GM12878 (cell line): ENCODE measurements at regions of chr17 and their contacts with region 1.

Region 1: GRCh38 chr17:7561028-7561575 is 617 bp upstream of the SENP3 start:
- DNase-seq: no peak
- ATAC-seq: peak; percentile 84
- H3K4me3 ChIP-seq: peak overlapping the region; percentile 92
- H3K27ac ChIP-seq: peak overlapping the region; percentile 23
- H3K4me1 ChIP-seq: peaks cover 37% of the 10 kb centered on the region
- H3K27me3 ChIP-seq: no peaks in the 10 kb centered on the region
- CTCF ChIP-seq: peak; percentile 93 to 99 (median 93); a peak in 5 of 6 replicates
- EP300 ChIP-seq: no peak
- POLR2A ChIP-seq: no peak
- RAD21 ChIP-seq: peak; percentile 74

Region 2: DNA sequence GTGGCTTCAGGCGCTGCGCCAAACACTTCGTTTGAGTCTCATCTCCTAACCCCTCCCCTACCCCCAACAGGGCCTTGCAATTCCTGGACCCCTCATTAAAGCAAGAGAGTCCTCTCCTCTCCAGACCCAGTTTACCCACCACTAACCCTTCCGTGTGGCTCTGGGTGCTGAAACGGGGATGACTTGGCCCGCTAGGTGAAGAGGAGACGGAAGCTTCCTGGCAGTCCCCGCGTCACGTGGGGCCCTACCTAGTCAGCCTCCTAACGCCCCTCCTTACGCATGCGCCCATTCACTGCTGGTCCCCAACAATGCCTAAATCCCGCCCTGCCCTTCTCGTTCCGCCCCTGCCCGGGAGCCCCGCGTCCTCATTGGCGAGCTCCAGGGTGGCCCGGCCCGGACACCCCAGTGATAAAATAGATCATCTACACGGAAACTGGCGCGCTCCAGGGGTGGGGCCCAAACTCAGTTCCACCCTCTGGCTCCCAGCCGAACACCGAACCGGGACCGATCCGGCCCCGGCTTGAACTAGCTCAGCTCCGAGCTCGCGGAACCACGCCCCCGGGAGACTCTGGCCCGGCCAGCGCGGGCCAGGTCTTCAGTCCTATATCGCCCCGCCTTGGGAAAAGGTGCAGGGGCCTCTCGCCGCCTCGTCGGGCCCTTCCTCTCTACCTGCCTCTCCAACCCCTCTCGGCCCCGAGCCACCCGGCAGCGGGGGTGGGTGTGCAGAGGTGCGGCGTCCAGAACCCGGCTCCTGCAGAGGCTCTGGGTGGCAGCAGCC is 525.3 kb before region 1 on chr17 and contains the start of gene SLC16A13:
- CTCF ChIA-PET with region 1: no interaction called
- POLR2A ChIA-PET with region 1: no interaction called
- RAD21 ChIA-PET with region 1: no interaction called
- SMC1A ChIA-PET with region 1: no interaction called
- in situ Hi-C with region 1: loop called (anchors 25 kb)
- intact Hi-C with region 1: no loop called
- DNase-seq: peak; percentile 96
- ATAC-seq: peak; percentile 96
- H3K4me3 ChIP-seq: peak within 1 kb of the TSS; percentile 77
- H3K27ac ChIP-seq: peak within 1 kb of the TSS; percentile 99
- H3K4me1 ChIP-seq: peaks cover 10% of the 10 kb centered on the region
- H3K27me3 ChIP-seq: no peaks in the 10 kb centered on the region
- CTCF ChIP-seq: no peak
- EP300 ChIP-seq: peak in 1 of 2 experiments; percentile 27; a peak in 1 of 4 replicates
- POLR2A ChIP-seq: peak; percentile 95
- RAD21 ChIP-seq: no peak
- polyA plus RNA-seq, gene SLC16A13: 0.34 to 0.46 TPM

Region 3: GRCh38 chr17:7263083-7264078 is 297.7 kb before region 1 on chr17:
- CTCF ChIA-PET with region 1: no interaction called
- POLR2A ChIA-PET with region 1: no interaction called
- RAD21 ChIA-PET with region 1: no interaction called
- SMC1A ChIA-PET with region 1: no interaction called
- in situ Hi-C with region 1: no loop called
- intact Hi-C with region 1: no loop called
- DNase-seq: no peak
- ATAC-seq: peak; percentile 32
- H3K4me3 ChIP-seq: no peak overlapping the region
- H3K27ac ChIP-seq: no peak overlapping the region
- H3K4me1 ChIP-seq: peaks cover 17% of the 10 kb centered on the region
- H3K27me3 ChIP-seq: peaks cover 3 to 5% of the 10 kb centered on the region in 2 experiments; a peak in 2 of 4 replicates
- CTCF ChIP-seq: no peak
- EP300 ChIP-seq: no peak
- POLR2A ChIP-seq: no peak
- RAD21 ChIP-seq: no peak

Region 4: GRCh38 chr17:7394452-7395191 is 166.5 kb before region 1 on chr17 and contains the start of gene PLSCR3:
- CTCF ChIA-PET with region 1: interaction called, 10 read pairs
- POLR2A ChIA-PET with region 1: no interaction called
- RAD21 ChIA-PET with region 1: interaction called, 3 read pairs
- SMC1A ChIA-PET with region 1: no interaction called
- in situ Hi-C with region 1: no loop called
- intact Hi-C with region 1: no loop called
- DNase-seq: peak; percentile 26
- ATAC-seq: peak; percentile 96
- H3K4me3 ChIP-seq: peak within 1 kb of the TSS; percentile 80
- H3K27ac ChIP-seq: peak within 1 kb of the TSS; percentile 58
- H3K4me1 ChIP-seq: no peaks in the 10 kb centered on the region
- H3K27me3 ChIP-seq: no peaks in the 10 kb centered on the region
- CTCF ChIP-seq: peak; percentile 7 to 56 (median 44); a peak in 4 of 6 replicates
- EP300 ChIP-seq: no peak
- POLR2A ChIP-seq: peak; percentile 83
- RAD21 ChIP-seq: no peak
- polyA plus RNA-seq, gene PLSCR3: 12.7 to 12.8 TPM

Region 5: GRCh38 chr17:7466639-7467341 is 94.3 kb before region 1 on chr17:
- CTCF ChIA-PET with region 1: no interaction called
- POLR2A ChIA-PET with region 1: no interaction called
- RAD21 ChIA-PET with region 1: no interaction called
- SMC1A ChIA-PET with region 1: no interaction called
- in situ Hi-C with region 1: no loop called
- intact Hi-C with region 1: no loop called
- DNase-seq: no peak
- ATAC-seq: no peak
- H3K4me3 ChIP-seq: no peak overlapping the region
- H3K27ac ChIP-seq: peak overlapping the region; percentile 44
- H3K4me1 ChIP-seq: no peaks in the 10 kb centered on the region; the same call in 1 of the 2 replicates
- H3K27me3 ChIP-seq: no peaks in the 10 kb centered on the region
- CTCF ChIP-seq: no peak
- EP300 ChIP-seq: no peak
- POLR2A ChIP-seq: no peak
- RAD21 ChIP-seq: no peak

Region 6: GRCh38 chr17:7484067-7484918 is 76.8 kb before region 1 on chr17 and contains the start of gene POLR2A:
- CTCF ChIA-PET with region 1: interaction called, 21 read pairs
- POLR2A ChIA-PET with region 1: interaction called, 6 read pairs
- RAD21 ChIA-PET with region 1: interaction called, 7 read pairs
- SMC1A ChIA-PET with region 1: interaction called, 6 read pairs
- in situ Hi-C with region 1: no loop called
- intact Hi-C with region 1: loop called (anchors 2 kb)
- DNase-seq: peak; percentile 95
- ATAC-seq: peak; percentile 76
- H3K4me3 ChIP-seq: peak within 1 kb of the TSS; percentile 99
- H3K27ac ChIP-seq: peak within 1 kb of the TSS; percentile 100
- H3K4me1 ChIP-seq: no peaks in the 10 kb centered on the region; the same call in 1 of the 2 replicates
- H3K27me3 ChIP-seq: no peaks in the 10 kb centered on the region
- CTCF ChIP-seq: no peak
- EP300 ChIP-seq: peak in 1 of 2 experiments; percentile 63; a peak in 3 of 4 replicates
- POLR2A ChIP-seq: peak; percentile 98
- RAD21 ChIP-seq: no peak
- polyA plus RNA-seq, gene POLR2A: 1.7 to 2.8 TPM

Region 7: GRCh38 chr17:7523033-7523432 is 38.1 kb before region 1 on chr17:
- CTCF ChIA-PET with region 1: interaction called, 192 read pairs
- POLR2A ChIA-PET with region 1: interaction called, 5 read pairs
- RAD21 ChIA-PET with region 1: interaction called, 32 read pairs
- SMC1A ChIA-PET with region 1: interaction called, 23 read pairs
- in situ Hi-C with region 1: no loop called
- intact Hi-C with region 1: loop called (anchors 2 kb)
- DNase-seq: no peak
- ATAC-seq: peak; percentile 83
- H3K4me3 ChIP-seq: no peak overlapping the region
- H3K27ac ChIP-seq: no peak overlapping the region
- H3K4me1 ChIP-seq: no peaks in the 10 kb centered on the region
- H3K27me3 ChIP-seq: no peaks in the 10 kb centered on the region
- CTCF ChIP-seq: peak; percentile 38 to 62 (median 62)
- EP300 ChIP-seq: no peak
- POLR2A ChIP-seq: no peak
- RAD21 ChIP-seq: peak; percentile 39; the same call in 1 of the 2 replicates

Region 8: DNA sequence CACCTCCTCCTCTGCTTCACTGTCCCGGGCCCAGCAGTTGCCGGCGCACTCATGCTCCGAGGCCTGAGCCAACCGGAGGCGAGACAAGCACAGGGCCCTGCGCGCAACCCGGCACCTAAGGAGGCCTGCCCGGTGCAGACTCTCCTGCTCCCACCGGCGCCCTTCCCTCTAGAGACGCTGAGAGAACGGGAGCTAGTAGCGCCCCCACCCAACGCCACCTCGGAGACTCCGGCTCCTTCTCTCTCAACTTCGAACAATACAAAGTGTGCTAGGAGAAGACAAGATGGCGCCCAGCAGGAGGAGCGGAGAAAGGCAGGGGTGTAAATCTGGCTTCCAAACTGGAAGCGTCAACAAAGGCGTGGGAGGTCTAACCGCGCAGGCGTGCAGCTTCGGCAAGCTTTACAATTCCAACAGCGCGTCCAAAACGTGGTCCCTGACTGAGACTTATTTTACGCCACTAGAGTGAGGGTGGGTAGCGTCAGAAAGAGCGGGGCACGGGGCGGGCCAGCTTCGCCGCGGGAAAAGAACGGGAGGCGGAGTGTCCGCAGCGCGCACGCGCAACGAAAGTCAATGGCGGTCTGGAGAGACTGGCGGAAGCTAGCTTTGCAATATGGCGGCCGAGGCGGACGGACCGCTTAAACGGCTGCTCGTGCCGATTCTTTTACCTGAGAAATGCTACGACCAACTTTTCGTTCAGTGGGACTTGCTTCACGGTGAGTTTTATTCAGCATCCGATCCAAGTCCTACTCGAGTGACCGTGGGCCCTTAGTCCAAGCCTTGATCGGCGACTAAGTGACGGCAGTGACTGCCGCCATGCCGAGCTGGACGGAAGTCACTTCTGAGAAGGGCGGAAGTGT is 22.4 kb after region 1 on chr17 and contains the start of gene MPDU1:
- CTCF ChIA-PET with region 1: interaction called, 23 read pairs
- POLR2A ChIA-PET with region 1: interaction called, 7 read pairs
- RAD21 ChIA-PET with region 1: interaction called, 9 read pairs
- SMC1A ChIA-PET with region 1: interaction called, 4 read pairs
- in situ Hi-C with region 1: no loop called
- intact Hi-C with region 1: no loop called
- DNase-seq: peak; percentile 84
- ATAC-seq: peak; percentile 77
- H3K4me3 ChIP-seq: peak within 1 kb of the TSS; percentile 75
- H3K27ac ChIP-seq: peak within 1 kb of the TSS; percentile 99
- H3K4me1 ChIP-seq: peaks cover 38% of the 10 kb centered on the region
- H3K27me3 ChIP-seq: no peaks in the 10 kb centered on the region
- CTCF ChIP-seq: no peak
- EP300 ChIP-seq: no peak
- POLR2A ChIP-seq: peak; percentile 96
- RAD21 ChIP-seq: no peak
- polyA plus RNA-seq, gene MPDU1: 3.6 to 11.6 TPM

Region 9: GRCh38 chr17:7809086-7809790 is 248.1 kb after region 1 on chr17:
- CTCF ChIA-PET with region 1: no interaction called
- POLR2A ChIA-PET with region 1: no interaction called
- RAD21 ChIA-PET with region 1: no interaction called
- SMC1A ChIA-PET with region 1: no interaction called
- in situ Hi-C with region 1: no loop called
- intact Hi-C with region 1: no loop called
- DNase-seq: no peak
- ATAC-seq: no peak
- H3K4me3 ChIP-seq: no peak overlapping the region
- H3K27ac ChIP-seq: no peak overlapping the region
- H3K4me1 ChIP-seq: no peaks in the 10 kb centered on the region
- H3K27me3 ChIP-seq: no peaks in the 10 kb centered on the region
- CTCF ChIP-seq: no peak
- EP300 ChIP-seq: no peak
- POLR2A ChIP-seq: no peak
- RAD21 ChIP-seq: no peak